ENCODE measurements at regions of chr17 and their contacts with region 1.

Region 1: DNA sequence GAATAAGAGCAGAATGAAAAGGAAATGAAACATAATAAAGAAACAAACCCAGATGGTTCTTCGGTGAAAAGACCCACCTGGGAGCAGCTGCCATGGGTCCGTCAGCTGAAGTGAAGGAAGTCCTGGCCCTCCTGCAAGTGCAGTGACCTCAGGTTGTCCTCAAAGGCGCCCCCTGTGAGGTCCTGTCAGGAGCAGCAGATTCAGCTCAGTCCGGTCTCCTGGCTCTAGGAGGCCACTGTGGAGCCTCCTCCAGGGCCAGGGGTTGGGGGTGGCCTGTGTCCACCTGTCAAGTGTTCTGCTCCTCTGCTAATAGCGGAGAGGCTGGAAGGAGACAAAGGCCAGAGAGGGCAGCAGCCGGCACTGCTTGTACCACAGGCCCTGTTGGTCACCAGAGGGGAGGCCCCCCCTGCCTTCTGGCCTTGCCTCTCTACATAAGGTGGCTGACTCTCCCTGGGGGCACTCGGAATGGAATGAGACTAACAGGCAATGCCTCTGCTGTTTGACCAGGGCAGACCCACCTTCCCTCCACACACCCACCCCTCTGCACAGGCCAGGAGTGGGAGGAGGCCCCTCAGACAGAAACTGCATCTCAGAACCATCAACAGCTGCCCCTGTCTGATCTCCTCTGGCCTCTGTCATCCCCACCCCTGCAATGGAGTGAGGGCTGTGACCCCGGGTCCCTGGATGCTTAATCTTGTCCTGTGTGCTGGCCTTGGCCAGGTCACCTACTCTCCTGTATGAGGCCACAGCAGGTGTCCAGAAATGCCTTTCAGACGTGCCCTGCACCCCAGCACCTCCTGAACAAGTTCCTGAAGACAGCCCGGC is 107.2 kb upstream of the ZNF750 start:
- DNase-seq: no peak
- H3K4me3 ChIP-seq: no peak overlapping the region
- H3K27ac ChIP-seq: no peak overlapping the region
- H3K4me1 ChIP-seq: no peaks in the 10 kb centered on the region
- H3K27me3 ChIP-seq: no peaks in the 10 kb centered on the region
- CTCF ChIP-seq: no peak
- POLR2A ChIP-seq: no peak

Region 2: GRCh38 chr17:82489117-82489516 is 457.9 kb before region 1 on chr17:
- intact Hi-C with region 1: loop called (anchors 5 kb)
- DNase-seq: peak in 1 of 2 donors; percentile 60
- H3K4me3 ChIP-seq: no peak overlapping the region
- H3K27ac ChIP-seq: peak overlapping the region; percentile 30
- H3K4me1 ChIP-seq: peaks cover 17% of the 10 kb centered on the region
- H3K27me3 ChIP-seq: no peaks in the 10 kb centered on the region
- CTCF ChIP-seq: no peak
- POLR2A ChIP-seq: no peak

Region 3: DNA sequence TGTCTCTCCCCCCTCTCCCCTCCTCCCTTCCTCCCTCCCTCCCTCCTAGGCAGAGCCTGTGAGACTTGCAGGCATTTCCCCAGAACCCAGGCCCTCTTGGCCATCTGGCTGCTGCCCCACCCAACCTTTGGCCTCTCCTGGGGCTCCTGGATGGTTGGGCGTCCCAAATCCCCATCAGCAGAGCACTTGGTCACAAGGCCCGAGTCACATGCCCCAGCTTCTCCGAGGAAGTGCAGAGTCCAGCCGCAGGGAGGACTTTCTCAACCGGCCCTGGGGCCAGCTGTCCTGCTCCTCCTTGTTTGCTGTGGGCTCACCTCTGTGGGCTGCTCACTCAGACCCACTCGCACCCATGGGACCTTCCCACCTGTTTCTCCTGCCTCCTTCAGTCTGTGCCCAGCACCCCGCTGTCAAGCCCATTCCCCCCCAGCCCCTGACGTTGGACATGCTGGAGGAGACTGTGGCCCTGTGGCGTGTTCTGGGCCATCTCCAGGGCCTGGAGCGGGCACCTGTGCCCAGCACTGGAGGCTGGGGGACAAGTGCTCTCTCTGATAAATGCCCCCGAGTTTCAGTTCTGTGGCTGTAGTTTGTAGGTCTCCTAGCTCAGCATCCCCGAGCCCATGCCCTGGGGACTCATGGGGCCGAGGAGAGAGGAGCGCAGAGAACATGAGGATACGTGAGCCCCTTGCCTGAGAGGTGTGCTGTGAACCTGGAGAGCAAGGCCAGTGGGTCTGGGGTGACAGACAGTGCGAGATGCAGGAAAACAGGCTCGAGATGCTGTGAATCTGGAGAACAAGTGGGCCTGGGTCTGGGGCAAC is 64.9 kb before region 1 on chr17:
- intact Hi-C with region 1: no loop called
- DNase-seq: no peak
- H3K4me3 ChIP-seq: no peak overlapping the region
- H3K27ac ChIP-seq: peak overlapping the region; percentile 62
- H3K4me1 ChIP-seq: peaks cover 47% of the 10 kb centered on the region
- H3K27me3 ChIP-seq: no peaks in the 10 kb centered on the region
- CTCF ChIP-seq: no peak
- POLR2A ChIP-seq: no peak

Region 4: DNA sequence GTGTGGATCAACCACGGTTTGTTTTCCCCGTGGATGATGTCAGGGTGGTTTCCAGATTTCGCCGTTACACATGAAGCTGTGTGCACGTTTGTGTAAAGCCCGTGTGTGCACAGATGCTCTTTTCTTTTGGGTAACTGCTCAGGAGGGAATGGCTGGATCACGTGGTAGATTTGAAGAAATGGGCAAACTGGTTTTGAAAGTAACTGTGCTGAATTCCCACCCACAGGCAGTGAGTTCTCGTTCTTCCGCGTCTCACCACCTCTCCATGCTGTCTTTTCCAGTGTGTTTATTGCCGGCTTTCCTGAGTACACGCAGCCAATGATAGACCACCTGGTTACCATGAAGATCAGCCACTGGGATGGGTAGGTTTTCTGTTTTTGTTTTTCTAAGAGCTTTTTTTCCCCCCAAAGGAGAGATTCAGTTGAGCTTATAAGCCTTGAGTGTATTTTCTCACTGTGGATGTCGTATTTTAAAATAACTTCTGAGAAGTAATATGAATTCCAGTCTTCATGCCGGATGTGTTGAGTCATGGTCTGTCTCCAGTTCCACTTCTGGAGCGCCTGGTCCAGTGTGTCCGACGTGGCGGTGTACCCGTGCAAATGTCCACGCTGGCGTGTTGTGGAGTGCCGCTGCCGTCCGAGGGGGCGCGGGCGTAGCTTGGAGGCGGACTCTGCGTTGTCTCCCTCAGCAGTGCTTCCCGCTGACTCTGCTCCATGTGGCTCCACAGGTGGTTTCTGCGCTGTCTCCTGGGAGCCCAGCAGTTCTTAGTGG is 46.5 kb before region 1 on chr17:
- intact Hi-C with region 1: no loop called
- DNase-seq: no peak
- H3K4me3 ChIP-seq: no peak overlapping the region
- H3K27ac ChIP-seq: no peak overlapping the region
- H3K4me1 ChIP-seq: no peaks in the 10 kb centered on the region
- H3K27me3 ChIP-seq: no peaks in the 10 kb centered on the region
- CTCF ChIP-seq: no peak
- POLR2A ChIP-seq: no peak

Region 5: GRCh38 chr17:83037084-83037873 is 90.3 kb after region 1 on chr17:
- intact Hi-C with region 1: no loop called
- DNase-seq: peak in 1 of 2 donors; percentile 58
- H3K4me3 ChIP-seq: no peak overlapping the region
- H3K27ac ChIP-seq: no peak overlapping the region
- H3K4me1 ChIP-seq: no peaks in the 10 kb centered on the region
- H3K27me3 ChIP-seq: no peaks in the 10 kb centered on the region
- CTCF ChIP-seq: no peak
- POLR2A ChIP-seq: no peak